Thyroid gland (tissue), 4 donors: ENCODE measurements at regions of chr10 and their contacts with region 1.

Region 1: GRCh38 chr10:106401161-106401560 is 763.3 kb downstream of the SORCS1 start:
- DNase-seq: no peak
- H3K4me3 ChIP-seq: no peak overlapping the region
- H3K27ac ChIP-seq: no peak overlapping the region
- H3K4me1 ChIP-seq: no peaks in the 10 kb centered on the region
- H3K27me3 ChIP-seq: no peaks in the 10 kb centered on the region
- CTCF ChIP-seq: peak in 3 of 6 experiments; percentile 43 to 54 (median 51)
- POLR2A ChIP-seq: no peak

Region 2: DNA sequence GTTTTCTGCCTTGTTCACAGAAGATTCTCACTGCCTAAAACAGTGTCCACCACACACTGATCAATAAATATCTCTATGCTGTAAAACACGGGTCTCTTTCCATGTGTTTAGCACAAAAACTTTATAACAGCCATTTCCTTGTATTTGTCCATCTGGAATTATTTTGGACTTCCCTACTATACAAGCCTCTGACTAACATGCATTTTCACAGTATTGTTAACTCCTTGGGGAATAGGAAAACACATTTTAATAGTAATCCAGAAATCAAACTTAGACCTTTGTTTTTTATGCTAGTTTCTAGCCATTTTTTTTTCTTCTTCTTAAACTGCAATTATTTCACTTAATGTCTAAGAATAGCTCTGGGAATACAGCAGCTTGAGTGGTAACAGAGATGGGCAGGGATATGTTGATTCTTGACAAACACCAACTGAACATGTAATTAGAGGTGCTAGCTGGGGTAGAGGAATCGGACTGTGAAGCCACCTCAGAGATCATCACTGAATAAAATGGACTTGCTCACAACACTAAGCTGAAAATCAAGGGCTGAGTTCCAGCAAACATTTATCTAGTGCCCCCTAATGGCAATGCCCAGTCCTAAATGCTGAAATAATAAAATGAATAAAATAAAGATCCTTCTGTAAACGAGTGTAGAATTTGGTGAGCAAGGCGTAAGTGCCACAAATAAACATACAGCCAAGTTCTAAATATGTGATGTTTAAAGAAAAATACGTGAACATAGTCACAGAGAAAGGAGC is 170.2 kb after region 1 on chr10:
- intact Hi-C with region 1: loop called (anchors 5 kb)
- DNase-seq: peak in 1 of 2 donors; percentile 9
- H3K4me3 ChIP-seq: no peak overlapping the region
- H3K27ac ChIP-seq: no peak overlapping the region
- H3K4me1 ChIP-seq: peaks cover 0 to 7% of the 10 kb centered on the region in 2 donors
- H3K27me3 ChIP-seq: no peaks in the 10 kb centered on the region
- CTCF ChIP-seq: peak in 5 of 6 experiments; percentile 14 to 64 (median 54)
- POLR2A ChIP-seq: no peak